ENCODE measurements at regions of chr18 and their contacts with region 1.

Region 1: GRCh38 chr18:48445540-48445939 is 36.4 kb upstream of the ZBTB7C start:
- DNase-seq: peak; percentile 56

Region 2: DNA sequence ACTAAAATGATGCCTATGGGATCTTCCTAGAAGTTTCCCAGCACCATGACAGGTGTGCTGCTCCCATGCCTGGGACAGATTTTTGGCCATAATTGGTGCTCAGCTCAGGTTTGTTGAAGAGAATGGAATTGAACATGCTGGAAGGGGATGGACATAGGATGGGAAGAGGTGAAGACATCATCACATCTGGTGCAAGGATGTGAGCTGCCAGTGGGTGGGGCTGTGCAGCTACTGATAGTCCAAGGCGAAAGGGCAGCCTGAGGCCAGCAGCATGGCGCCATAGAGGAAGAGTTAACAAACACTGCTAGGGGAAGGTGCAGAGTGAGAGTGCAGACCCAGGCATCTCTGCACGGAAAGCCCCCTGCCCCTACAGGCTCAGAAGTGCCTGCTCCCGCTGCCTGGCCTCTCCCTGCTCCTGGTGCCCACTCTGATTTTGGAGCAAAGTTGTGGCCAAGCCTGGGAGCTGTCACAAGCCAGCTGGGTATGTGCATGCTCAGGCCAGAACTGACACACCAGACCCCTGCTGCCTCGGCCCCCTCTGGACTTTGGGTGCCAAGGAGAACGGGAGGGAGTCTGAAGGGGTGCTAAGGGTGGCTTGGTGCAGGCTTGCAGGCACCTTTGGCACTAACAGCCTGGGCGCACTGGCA is 214.9 kb before region 1 on chr18:
- CTCF ChIA-PET with region 1: interaction called, 12 read pairs
- POLR2A ChIA-PET with region 1: no interaction called
- DNase-seq: peak; percentile 56

Region 3: GRCh38 chr18:48538531-48539405 is 93.2 kb after region 1 on chr18 and contains the start of gene CTIF:
- CTCF ChIA-PET with region 1: no interaction called
- POLR2A ChIA-PET with region 1: no interaction called
- DNase-seq: peak; percentile 81